ENCODE measurements at regions of chr17 and their contacts with region 1.

Region 1: DNA sequence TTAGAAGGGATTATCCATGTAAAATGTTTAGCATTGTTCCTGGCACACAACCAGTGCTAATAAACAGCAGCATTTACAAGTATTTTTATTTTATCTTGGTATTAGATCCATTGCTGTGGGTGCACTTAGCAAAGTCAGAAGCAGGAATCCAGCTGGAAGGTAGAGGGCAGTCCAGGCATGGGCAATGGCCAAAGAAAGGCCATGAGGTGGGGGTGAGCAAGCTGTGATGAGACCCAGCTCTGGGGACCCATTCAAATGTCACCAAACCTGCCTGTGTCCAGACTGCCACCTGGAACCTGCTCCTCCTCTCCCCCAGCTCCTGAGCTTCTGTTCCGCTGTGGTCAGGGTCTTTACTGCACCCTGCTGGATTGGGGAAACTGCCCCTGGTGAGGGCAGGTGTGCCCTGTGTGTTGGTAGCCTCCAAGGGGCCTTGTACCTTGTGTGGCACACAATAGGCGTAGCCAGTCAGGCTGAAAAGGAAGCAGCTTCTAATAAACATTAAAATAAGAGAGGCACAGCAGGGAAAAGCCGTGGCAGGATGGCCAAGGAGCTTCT is 118.0 kb upstream of the CRHR1 start:
- H3K4me3 ChIP-seq: no peak overlapping the region
- H3K27ac ChIP-seq: no peak overlapping the region
- H3K4me1 ChIP-seq: no peaks in the 10 kb centered on the region
- CTCF ChIP-seq: no peak

Region 2: DNA sequence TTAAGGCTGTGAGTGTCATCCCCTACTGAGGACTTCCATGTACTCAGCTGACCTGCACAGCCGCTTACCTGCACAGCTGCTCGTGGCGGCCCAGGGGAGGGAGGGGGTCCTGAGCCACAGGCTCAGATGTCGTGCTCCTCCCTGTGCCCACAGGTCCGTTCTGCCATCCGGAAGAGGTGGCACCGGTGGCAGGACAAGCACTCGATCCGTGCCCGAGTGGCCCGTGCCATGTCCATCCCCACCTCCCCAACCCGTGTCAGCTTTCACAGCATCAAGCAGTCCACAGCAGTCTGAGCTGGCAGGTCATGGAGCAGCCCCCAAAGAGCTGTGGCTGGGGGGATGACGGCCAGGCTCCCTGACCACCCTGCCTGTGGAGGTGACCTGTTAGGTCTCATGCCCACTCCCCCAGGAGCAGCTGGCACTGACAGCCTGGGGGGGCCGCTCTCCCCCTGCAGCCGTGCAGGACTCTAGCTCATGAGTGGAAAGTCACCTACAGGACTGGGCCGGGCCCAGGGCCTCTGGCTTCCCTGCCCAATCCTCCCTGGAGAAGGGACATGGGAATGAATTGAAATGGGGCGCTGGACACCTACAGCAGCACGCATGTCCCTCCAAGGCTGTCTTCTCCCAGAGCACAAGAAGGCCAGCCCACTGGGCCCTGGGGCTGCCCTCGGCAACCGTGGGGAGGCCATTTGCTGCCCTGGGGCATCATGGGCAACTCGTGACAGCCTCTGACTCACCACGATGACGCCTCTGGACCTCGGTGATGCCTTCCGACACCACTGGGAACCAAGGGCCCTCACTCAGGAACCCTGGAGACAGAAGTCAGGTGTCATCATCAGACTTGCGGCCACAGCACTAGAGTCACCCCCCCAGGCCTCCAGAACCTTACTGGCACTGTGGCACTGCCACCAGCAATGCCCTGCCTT is 168.6 kb after region 1 on chr17:
- CTCF ChIA-PET with region 1: interaction called, 10 read pairs
- POLR2A ChIA-PET with region 1: no interaction called
- H3K4me3 ChIP-seq: no peak overlapping the region
- H3K27ac ChIP-seq: no peak overlapping the region
- H3K4me1 ChIP-seq: no peaks in the 10 kb centered on the region
- CTCF ChIP-seq: no peak